Activated CD4-positive, alpha-beta T cell treated with anti-CD3 and anti-CD28 coated beads, Interleukin-2, amount 10 ng/mL, durations not matched to agents 7 days and 5 days (primary cell): ENCODE measurements at regions of chr10 and their contacts with region 1.

Region 1: DNA sequence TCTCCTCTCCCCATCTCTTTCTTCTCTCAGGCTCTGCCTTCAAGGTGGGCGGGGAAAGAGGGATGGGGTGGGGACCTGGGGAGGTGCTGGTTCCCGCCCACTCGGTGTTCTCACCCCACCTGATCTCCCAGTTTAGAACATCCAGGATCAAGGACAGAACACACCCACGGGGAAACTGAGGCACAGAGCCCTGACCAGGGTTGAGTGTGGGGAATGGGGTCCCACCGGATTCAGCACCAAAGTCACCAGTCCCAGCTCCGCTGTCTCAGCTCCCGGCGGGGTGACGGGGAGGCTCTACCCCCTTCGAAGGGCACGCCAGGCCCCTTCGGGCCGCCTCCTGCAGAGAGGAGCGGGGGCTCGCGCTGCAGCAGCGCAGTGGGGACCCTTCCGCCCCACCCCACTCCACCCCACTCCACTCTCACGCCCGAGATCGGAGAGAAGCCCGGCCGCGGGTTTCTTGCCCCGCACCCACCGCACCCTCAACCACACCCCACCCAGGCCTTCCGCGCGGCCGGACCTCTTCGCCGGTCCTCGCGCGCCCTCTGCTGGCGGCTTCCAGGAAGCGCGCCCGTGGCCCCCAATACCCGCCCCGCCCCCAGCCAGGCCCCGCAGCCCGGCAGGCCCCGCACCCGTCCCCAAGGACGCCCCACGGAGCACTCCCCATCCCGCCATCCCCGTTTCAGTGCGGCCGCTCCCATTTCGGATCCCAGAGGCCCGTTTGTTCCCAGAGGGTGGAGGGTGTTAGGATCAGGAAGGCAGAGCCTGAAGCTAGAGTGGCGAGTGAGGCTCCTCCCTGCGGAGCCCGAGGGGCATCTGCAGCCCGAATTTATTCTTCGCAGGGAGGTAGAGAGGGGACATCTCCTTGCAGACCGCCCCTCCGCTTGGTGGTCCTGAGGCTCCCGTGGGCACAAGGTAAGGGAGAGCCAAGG is 18.0 kb downstream of the POLL start:
- DNase-seq: peak; percentile 82
- H3K4me3 Mint-ChIP-seq: peak overlapping the region; percentile 73
- H3K27ac Mint-ChIP-seq: no peak overlapping the region
- H3K4me1 Mint-ChIP-seq: peaks cover 18% of the 10 kb centered on the region
- H3K27me3 Mint-ChIP-seq: peaks cover 42% of the 10 kb centered on the region

Region 2: DNA sequence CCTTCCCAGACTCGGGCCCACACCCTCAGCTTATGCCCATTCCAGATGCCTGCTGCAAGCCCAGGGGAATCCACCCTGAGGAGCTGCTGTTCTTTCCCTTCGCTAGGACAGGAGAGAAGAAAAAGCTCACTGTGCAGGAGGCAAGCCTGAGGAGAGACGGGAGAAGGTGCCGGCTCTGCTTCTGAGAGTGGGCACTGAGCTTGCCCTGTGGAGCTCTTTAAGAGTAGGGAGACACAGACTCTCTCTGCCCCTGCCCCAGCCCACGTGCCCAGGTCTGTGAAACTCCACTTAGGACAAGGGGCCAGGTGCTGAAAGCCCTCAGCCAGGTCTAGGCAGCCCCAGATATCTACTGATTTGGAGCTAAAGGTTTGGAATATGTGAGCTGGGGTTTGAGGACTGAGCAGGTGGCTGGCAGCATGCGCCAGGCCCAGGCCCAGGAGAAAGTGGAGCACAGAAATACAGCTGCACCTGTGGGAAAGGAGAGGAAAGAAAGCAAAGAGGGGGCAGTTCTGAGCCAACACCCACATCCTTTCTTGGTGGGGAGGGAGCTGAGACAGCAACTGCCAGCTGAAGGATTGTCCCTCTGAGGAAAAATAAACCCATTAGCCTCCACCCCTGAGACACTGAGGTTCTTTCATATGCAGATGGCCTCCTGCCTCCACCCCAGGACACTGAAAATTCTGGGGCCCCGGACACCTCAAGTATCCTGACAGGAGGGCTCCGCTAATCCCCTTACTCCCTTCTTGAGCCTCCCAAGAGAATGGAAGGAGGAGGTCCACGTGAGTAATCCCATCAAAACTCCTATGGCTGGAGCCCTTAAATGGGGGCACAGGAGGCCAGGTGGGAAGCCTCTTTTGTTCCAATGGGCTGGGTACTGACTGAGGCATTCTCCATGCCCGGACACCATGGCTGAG is 10.6 kb after region 1 on chr10:
- CTCF ChIA-PET with region 1: interaction called, 21 read pairs
- POLR2A ChIA-PET with region 1: no interaction called
- DNase-seq: no peak
- H3K4me3 Mint-ChIP-seq: no peak overlapping the region
- H3K27ac Mint-ChIP-seq: peak overlapping the region; percentile 46
- H3K4me1 Mint-ChIP-seq: peaks cover 3% of the 10 kb centered on the region
- H3K27me3 Mint-ChIP-seq: no peaks in the 10 kb centered on the region

Region 3: GRCh38 chr10:101710059-101710695 is 140.1 kb after region 1 on chr10:
- CTCF ChIA-PET with region 1: no interaction called
- POLR2A ChIA-PET with region 1: no interaction called
- DNase-seq: no peak
- H3K4me3 Mint-ChIP-seq: no peak overlapping the region
- H3K27ac Mint-ChIP-seq: no peak overlapping the region
- H3K4me1 Mint-ChIP-seq: peaks cover 24% of the 10 kb centered on the region
- H3K27me3 Mint-ChIP-seq: peaks cover 47% of the 10 kb centered on the region